ENCODE measurements at regions of chr15 and their contacts with region 1.

Region 1: GRCh38 chr15:80121546-80121945 is 31.3 kb upstream of the FAH start:
- DNase-seq: no peak
- ATAC-seq: no peak
- H3K4me3 ChIP-seq: no peak overlapping the region
- H3K4me3 Mint-ChIP-seq: no peak overlapping the region
- H3K27ac ChIP-seq: no peak overlapping the region
- H3K27ac Mint-ChIP-seq: no peak overlapping the region
- H3K4me1 ChIP-seq: no peaks in the 10 kb centered on the region
- H3K4me1 Mint-ChIP-seq: peaks cover 15% of the 10 kb centered on the region
- H3K27me3 ChIP-seq: no peaks in the 10 kb centered on the region
- H3K27me3 Mint-ChIP-seq: no peaks in the 10 kb centered on the region
- CTCF ChIP-seq: no peak

Region 2: DNA sequence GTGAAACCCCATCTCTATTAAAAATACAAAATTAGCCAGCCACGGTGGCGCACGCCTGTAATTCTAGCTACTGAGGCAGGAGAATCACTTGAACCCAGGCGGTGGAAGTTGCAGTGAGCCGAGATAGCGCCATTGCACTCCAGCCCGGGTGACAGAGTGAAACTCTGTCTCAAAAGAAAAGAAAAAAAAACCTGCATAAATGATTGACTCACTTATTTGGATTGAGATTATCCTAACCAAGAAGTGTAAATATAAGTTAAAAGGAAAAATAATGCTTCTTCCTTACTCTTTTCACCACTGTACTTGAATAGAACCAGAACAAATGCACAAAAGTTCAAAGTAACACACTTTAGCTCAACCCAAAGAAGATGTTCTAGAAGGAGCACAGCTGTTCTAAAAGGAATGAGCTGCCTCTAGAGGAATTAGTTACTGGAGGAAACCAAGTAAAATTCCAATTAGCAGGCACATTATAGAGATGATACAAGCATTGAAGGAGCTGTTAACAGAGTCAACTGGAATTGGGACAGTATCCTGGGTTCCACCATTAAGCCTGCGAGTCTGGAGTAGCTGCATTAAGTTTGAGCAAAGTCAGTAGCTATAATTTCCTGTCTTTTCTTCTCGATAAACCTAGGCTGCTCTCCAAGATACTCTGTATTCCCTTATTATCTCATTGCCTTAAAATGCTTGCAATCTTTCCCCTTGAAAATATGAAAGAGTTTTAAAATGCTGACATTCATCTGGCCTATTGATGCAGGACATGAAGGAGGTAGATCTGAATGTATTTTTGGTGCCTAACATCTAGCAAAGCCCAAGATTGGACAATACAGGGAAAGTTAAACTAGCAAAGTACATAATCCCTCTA is 234.3 kb before region 1 on chr15:
- CTCF ChIA-PET with region 1: no interaction called
- POLR2A ChIA-PET with region 1: no interaction called
- intact Hi-C with region 1: no loop called
- DNase-seq: no peak
- ATAC-seq: no peak
- H3K4me3 ChIP-seq: no peak overlapping the region
- H3K4me3 Mint-ChIP-seq: no peak overlapping the region
- H3K27ac ChIP-seq: no peak overlapping the region
- H3K27ac Mint-ChIP-seq: no peak overlapping the region
- H3K4me1 ChIP-seq: no peaks in the 10 kb centered on the region
- H3K4me1 Mint-ChIP-seq: peaks cover 2% of the 10 kb centered on the region
- H3K27me3 ChIP-seq: no peaks in the 10 kb centered on the region
- H3K27me3 Mint-ChIP-seq: no peaks in the 10 kb centered on the region
- CTCF ChIP-seq: no peak

Region 3: DNA sequence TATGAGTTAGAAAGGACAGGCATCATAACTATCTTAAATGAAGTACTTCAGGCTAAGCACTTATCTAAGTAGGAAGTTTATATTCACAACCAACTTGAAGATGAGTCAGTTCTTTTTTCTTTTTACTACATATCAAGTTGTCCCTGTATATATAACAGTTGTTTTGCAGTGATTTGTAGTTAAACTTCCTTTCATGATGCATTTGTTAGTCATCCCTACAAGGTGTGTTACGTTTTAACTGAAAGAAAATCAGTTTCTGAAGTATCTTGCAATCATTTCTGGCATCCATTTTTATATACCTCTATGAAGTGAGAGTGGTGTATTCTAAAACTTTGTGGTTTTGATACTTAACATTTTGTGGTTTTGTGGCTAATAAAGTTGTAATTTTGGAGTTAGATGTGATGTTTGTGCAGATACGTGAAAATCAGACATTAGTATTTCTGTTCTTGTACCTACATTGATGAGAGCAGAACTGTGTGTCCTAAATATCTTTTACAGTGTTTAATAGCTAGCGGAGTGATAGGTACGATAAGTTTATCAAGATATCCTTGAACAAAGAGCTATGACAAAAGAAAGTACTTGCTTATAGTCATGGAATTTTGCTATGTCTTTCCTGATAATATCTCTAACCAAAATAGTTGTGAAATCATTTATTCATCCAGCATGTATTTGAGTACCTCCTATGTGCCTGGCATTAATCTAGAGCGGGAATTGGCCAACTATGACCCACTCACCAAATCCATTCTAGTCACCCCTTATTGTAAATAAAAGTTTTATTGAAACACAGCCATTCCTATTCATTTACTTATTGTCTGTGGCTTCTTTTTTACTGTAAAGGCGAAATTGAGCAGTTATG is 15.7 kb before region 1 on chr15:
- CTCF ChIA-PET with region 1: interaction called, 3 read pairs
- POLR2A ChIA-PET with region 1: no interaction called
- intact Hi-C with region 1: loop called (anchors 2 kb)
- DNase-seq: no peak
- ATAC-seq: no peak
- H3K4me3 ChIP-seq: no peak overlapping the region
- H3K4me3 Mint-ChIP-seq: no peak overlapping the region
- H3K27ac ChIP-seq: no peak overlapping the region
- H3K27ac Mint-ChIP-seq: no peak overlapping the region
- H3K4me1 ChIP-seq: peaks cover 0 to 7% of the 10 kb centered on the region in 2 donors
- H3K4me1 Mint-ChIP-seq: peaks cover 59% of the 10 kb centered on the region
- H3K27me3 ChIP-seq: no peaks in the 10 kb centered on the region
- H3K27me3 Mint-ChIP-seq: no peaks in the 10 kb centered on the region
- CTCF ChIP-seq: no peak

Region 4: DNA sequence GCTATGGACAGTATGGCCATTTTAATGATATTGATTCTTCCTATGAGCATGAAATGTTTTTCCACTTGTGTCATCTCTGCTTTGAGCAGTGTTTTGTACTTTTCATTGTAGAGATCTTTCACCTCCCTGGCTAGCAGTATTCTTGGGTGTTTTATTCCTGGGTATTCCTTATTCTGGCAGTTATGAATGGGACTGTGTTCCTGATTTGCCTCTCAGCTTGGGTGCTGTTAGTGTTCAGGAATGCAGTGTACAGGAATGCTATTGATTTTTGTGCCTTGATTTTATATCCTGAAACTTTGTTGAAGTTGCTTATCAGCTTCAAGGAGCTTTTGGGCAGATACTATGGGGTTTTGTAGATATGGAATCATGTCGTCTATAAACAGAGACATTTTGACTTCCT is 179.9 kb after region 1 on chr15:
- CTCF ChIA-PET with region 1: no interaction called
- POLR2A ChIA-PET with region 1: no interaction called
- intact Hi-C with region 1: no loop called
- DNase-seq: no peak
- ATAC-seq: no peak
- H3K4me3 ChIP-seq: no peak overlapping the region
- H3K4me3 Mint-ChIP-seq: no peak overlapping the region
- H3K27ac ChIP-seq: no peak overlapping the region
- H3K27ac Mint-ChIP-seq: no peak overlapping the region
- H3K4me1 ChIP-seq: no peaks in the 10 kb centered on the region
- H3K4me1 Mint-ChIP-seq: no peaks in the 10 kb centered on the region
- H3K27me3 ChIP-seq: peaks cover 0 to 2% (median 0%) of the 10 kb centered on the region in 4 experiments
- H3K27me3 Mint-ChIP-seq: peaks cover 2% of the 10 kb centered on the region
- CTCF ChIP-seq: no peak

Measured in B cell (primary cell).